GM18951 (cell line): ENCODE measurements at regions of chr7 and their contacts with region 1.

Region 1: GRCh38 chr7:74183613-74184450 is 9.7 kb downstream of the EIF4H start:
- POLR2A ChIP-seq: no peak

Region 2: GRCh38 chr7:73701357-73701995 is 482.4 kb before region 1 on chr7:
- in situ Hi-C with region 1: no loop called
- POLR2A ChIP-seq: no peak

Region 3: DNA sequence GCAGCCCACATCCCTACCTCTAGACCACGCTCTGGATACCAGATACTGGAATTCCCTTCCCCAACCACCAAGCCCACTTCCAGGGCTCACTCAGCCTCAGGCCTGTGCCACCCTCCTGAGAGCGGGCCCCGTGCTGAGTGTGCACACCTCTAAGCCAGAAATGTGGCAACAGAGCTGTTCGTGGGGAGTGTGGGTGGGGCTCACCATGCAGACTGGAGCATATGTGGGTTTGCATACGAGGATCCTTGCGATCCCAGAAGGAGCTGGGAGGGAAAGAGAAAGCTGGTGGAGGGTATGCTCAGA is 113.3 kb before region 1 on chr7:
- in situ Hi-C with region 1: loop called (anchors 10 kb)
- POLR2A ChIP-seq: no peak

Region 4: GRCh38 chr7:74466196-74466813 is 282.5 kb after region 1 on chr7:
- in situ Hi-C with region 1: no loop called
- POLR2A ChIP-seq: no peak